BJ (cell line): ENCODE measurements at regions of chr11 and their contacts with region 1.

Region 1: GRCh38 chr11:44095506-44096394 is at the start of gene EXT2:
- DNase-seq: no peak
- H3K4me3 ChIP-seq: peak within 1 kb of the TSS; percentile 93
- H3K27me3 ChIP-seq: no peaks in the 10 kb centered on the region; the same call in 1 of the 2 replicates
- CTCF ChIP-seq: peak; percentile 96
- polyA plus RNA-seq, gene EXT2: 171 and 196 TPM in 2 replicates

Region 2: DNA sequence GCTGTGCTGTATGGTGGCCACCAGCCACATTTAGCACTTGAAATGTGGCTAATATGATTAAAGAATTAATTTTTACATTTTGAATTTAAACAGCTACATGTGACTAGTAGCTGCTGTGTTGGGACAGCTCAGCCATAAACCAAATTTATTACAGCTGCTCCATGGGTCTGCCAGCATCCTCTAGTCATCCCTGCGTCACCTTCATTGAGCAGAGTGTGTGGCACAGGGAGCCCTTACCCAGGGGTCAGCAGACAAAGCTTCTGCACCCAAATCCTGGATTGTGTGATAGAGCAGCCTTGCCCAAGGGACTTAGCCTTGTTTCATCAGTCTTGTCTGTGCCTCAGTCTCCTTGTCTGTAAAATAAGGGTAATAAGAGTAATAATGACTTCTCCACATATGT is 67.3 kb before region 1 on chr11:
- CTCF ChIA-PET with region 1: no interaction called
- POLR2A ChIA-PET with region 1: no interaction called
- DNase-seq: no peak
- H3K4me3 ChIP-seq: no peak overlapping the region
- H3K27me3 ChIP-seq: peaks cover 8% of the 10 kb centered on the region
- CTCF ChIP-seq: no peak

Region 3: DNA sequence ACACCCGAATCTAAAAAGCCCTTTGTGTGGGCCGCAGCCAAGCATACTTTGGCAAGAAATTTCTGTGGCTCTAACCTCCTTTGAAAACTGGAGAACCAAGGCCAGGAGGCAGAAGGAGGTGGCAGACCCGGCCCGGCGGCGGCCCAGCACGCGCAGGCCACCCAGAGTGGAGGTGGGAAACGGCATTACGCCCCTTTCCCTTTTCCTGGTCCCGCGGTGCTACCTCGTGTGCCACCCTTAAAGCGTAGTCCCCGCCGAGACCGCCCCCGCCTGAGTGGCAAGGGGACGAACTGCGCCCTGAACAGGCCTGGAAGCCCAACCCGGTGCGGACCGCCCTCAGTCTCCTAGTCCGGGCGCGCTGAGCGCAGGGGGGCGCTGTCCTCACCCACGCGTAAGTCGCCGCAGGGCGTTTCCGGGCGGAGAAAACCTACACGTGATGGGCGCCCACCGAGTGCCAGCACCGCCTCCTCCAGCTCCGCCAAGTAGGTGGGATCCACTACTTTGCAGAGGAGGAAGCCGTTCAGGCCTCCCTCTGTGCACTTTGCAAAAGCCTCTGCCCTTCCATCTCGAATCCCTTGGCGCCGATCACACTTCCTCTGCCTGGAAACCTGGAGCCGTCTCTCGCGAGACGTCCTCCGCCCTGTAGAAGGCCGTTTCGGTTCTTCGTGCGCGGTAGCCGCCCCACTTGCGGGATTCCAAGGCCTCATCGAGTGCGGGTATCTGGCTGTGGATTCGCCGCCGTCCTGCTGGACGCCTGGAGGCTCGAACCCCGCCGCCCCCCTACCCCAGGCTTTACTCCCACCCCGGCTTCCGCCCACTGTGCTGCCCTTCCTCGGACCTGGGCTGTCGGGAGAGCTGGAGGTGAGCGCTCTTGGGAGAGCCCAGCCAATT is 29.7 kb before region 1 on chr11 and contains the start of gene ACCS:
- CTCF ChIA-PET with region 1: interaction called, 18 read pairs
- POLR2A ChIA-PET with region 1: no interaction called
- DNase-seq: peak; percentile 58
- H3K4me3 ChIP-seq: peak within 1 kb of the TSS; percentile 76
- H3K27me3 ChIP-seq: no peaks in the 10 kb centered on the region
- CTCF ChIP-seq: peak; percentile 88
- polyA plus RNA-seq, gene ACCS: 8.1 and 13.7 TPM in 2 replicates

Region 4: GRCh38 chr11:44072757-44073658 is 22.7 kb before region 1 on chr11:
- CTCF ChIA-PET with region 1: interaction called, 18 read pairs
- POLR2A ChIA-PET with region 1: no interaction called
- DNase-seq: no peak
- H3K4me3 ChIP-seq: no peak overlapping the region
- H3K27me3 ChIP-seq: no peaks in the 10 kb centered on the region
- CTCF ChIP-seq: no peak

Region 5: GRCh38 chr11:44078794-44079193 is 17.0 kb before region 1 on chr11:
- CTCF ChIA-PET with region 1: interaction called, 20 read pairs
- POLR2A ChIA-PET with region 1: no interaction called
- DNase-seq: no peak
- H3K4me3 ChIP-seq: no peak overlapping the region
- H3K27me3 ChIP-seq: no peaks in the 10 kb centered on the region
- CTCF ChIP-seq: no peak

Region 6: DNA sequence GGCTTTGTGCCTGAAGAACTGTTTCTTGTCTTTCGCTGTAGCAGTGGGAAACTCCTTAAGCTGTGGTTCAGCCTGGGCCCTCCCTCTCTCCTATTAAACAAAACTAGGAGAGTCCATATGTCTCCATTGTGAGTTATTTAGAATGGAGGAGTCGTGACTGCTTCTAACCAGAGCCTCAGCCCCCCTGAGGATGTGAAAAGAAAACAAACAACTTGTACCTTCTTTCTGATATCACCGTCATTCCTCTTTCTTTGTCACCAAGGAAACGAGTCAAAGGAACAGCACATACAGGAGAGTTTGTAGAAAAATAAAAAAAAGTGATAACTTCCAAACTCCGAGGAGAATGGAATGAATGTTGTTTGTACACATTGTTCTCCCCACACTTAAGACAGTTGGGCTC is 11.8 kb before region 1 on chr11:
- CTCF ChIA-PET with region 1: interaction called, 20 read pairs
- POLR2A ChIA-PET with region 1: no interaction called
- DNase-seq: no peak
- H3K4me3 ChIP-seq: no peak overlapping the region
- H3K27me3 ChIP-seq: 0 out of 2 replicates have a peak, but pooled peaks cover 1% of the 10 kb centered on the region
- CTCF ChIP-seq: no peak

Region 7: GRCh38 chr11:44110231-44110679 is 14.5 kb after region 1 on chr11:
- CTCF ChIA-PET with region 1: interaction called, 48 read pairs
- POLR2A ChIA-PET with region 1: no interaction called
- DNase-seq: no peak
- H3K4me3 ChIP-seq: no peak overlapping the region
- H3K27me3 ChIP-seq: no peaks in the 10 kb centered on the region; the same call in 1 of the 2 replicates
- CTCF ChIP-seq: peak; percentile 84

Region 8: DNA sequence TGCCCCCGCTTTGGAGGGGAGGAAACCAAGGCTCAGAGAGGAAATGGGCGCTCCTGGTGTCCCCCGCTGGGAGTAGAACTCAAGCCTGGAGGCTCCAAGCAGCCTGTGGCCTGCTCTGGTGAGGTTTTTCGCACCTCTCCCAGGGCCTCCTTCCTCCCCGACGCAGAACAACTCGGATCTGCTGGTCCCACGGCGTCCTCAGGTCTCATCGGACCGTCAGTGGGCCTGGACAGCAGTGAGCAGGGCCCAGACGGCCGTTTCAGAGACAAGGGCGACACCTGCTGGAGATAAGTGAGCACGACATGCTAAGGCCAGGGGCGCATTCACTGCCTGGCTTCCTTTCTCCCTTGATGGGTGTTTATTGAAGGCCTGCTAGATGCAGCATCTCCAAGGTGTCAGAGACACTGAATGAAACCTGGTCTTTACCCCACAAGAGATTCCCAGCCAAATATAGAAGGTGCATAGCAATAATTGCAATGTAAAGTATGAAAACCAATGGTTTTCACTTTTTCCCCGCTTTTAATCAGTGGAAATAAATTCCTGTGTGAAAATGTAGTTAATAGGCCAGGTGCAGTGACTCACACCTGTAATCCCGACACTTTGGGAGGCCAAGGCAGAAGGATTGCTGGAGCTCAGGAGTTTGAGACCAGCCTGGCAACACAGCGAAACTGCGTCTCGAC is 442.8 kb after region 1 on chr11:
- CTCF ChIA-PET with region 1: interaction called, 33 read pairs
- POLR2A ChIA-PET with region 1: interaction called, 3 read pairs
- DNase-seq: no peak
- H3K4me3 ChIP-seq: no peak overlapping the region
- H3K27me3 ChIP-seq: peaks cover 2% of the 10 kb centered on the region
- CTCF ChIP-seq: peak; percentile 90

Region 9: GRCh38 chr11:44755556-44756523 is 660.1 kb after region 1 on chr11:
- CTCF ChIA-PET with region 1: no interaction called
- POLR2A ChIA-PET with region 1: no interaction called
- DNase-seq: no peak
- H3K4me3 ChIP-seq: no peak overlapping the region
- H3K27me3 ChIP-seq: peaks cover 6% of the 10 kb centered on the region; the same call in 1 of the 2 replicates
- CTCF ChIP-seq: no peak